Activated naive CD8-positive, alpha-beta T cell treated with anti-CD3 and anti-CD28 coated beads, Interleukin-2, amount 10 ng/mL, durations not matched to agents 7 days and 5 days (primary cell): ENCODE measurements at regions of chr19 and their contacts with region 1.

Region 1: DNA sequence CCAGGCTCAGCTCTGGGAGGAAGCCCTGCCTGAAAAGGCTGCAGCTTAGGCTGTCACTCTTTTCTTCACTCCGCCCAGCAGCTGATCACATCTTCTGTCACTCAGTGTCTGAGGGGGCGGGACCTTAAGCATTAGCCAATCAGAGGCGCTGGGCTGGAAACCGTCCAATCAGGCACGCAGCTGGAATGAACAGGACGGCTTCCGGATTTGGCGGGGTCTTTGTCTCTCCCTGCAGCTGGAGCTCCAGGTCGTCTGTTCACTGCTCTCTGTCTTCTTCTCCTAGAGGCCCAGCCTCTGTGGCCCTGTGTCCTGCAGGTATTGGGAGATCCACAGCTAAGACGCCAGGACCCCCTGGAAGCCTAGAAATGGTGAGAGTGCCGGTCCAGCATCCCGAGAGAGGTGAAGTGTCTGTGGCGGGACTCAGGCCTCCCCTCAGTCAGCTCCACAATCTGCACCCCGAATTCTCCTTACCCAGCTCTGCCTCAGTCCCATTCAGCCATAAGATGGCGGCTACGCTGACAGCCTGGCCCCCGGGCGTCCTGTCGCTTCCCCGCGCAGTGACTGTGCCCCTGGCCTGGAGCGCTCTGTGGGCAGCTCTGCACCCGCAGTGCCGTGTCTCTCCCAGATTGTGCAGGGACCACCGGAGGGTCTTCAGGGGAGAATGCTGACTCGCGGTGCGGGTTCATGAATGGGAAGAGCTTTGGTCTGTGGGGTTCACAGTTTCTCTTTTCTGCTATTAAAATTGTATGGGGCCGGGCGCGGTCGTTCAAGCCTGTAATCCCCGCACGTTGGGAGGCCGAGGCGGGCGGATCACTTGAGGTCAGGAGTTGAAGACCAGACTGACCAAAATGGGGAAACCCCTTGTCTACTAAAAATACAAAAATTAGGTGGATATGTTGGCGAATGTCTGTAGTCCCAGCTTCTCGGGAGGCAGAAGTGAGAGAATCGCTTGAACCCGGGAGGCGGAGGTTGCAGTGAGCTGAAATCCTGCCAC is at the start of gene ZNF66:
- DNase-seq: peak; percentile 87
- ATAC-seq: peak; percentile 97
- H3K4me3 Mint-ChIP-seq: peak within 1 kb of the TSS; percentile 97
- H3K27ac Mint-ChIP-seq: peak within 1 kb of the TSS; percentile 98
- H3K4me1 Mint-ChIP-seq: peaks cover 5% of the 10 kb centered on the region
- H3K27me3 Mint-ChIP-seq: no peaks in the 10 kb centered on the region
- total RNA-seq, gene ZNF66: 15.4 to 16.7 TPM

Region 2: GRCh38 chr19:20423381-20424197 is 352.8 kb before region 1 on chr19:
- POLR2A ChIA-PET with region 1: interaction called, 12 read pairs
- DNase-seq: peak; percentile 52
- ATAC-seq: no peak
- H3K4me3 Mint-ChIP-seq: peak overlapping the region; percentile 96
- H3K27ac Mint-ChIP-seq: peak overlapping the region; percentile 98
- H3K4me1 Mint-ChIP-seq: peaks cover 8% of the 10 kb centered on the region
- H3K27me3 Mint-ChIP-seq: no peaks in the 10 kb centered on the region

Region 3: DNA sequence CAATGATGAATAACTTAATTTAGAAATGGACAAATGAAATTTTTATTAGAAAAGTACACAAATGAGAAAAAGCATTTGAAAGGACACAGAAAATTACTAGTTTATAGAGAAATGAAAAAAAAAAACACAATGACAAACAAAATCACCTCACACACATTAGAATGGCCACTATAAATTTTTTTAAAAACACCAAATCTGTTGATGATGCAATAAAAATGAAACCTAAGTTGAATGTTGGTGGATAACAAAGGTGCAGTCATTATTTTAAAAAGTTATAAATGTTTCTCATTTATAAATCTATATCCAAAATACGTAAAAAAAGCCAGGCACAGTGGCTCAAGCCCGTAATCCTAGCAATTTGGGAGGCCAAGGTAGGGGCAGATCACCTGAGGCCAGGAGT is 135.8 kb before region 1 on chr19:
- POLR2A ChIA-PET with region 1: no interaction called
- DNase-seq: no peak
- ATAC-seq: no peak
- H3K4me3 Mint-ChIP-seq: no peak overlapping the region
- H3K27ac Mint-ChIP-seq: no peak overlapping the region
- H3K4me1 Mint-ChIP-seq: no peaks in the 10 kb centered on the region
- H3K27me3 Mint-ChIP-seq: no peaks in the 10 kb centered on the region

Region 4: DNA sequence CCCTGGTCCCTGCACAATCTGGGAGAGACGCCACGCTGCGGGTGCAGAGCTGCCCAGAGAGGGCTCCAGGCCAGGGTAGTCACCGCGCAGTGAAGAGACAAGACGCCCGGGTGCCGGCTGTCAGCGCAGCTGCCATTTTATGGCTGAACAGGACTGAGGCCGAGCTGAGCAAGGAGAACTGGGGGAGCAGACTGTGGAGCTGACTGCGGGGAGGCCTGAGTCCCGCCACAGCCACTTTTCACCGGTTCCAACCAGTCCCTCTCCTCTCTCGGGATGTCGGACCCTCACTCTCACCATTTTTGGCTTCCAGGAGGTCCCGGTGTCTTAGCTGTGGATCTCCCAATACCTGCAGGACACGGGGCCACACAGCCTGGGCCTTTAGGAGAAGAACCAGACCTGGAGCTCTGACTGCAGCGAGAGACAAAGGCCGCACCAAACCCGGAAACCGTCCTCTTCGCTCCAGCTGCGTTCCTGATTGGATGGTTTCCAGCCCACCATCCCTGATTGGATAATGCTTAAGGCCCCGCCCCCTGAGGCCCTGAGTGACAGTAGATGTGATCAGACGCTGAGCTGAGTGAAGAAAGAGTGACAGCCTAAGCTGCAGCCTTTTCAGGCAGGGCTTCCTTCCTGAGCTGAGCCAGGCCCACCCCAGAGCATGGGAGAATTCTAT is 115.1 kb before region 1 on chr19 and contains the start of gene ZNF626:
- POLR2A ChIA-PET with region 1: interaction called, 26 read pairs
- DNase-seq: peak; percentile 85
- ATAC-seq: peak; percentile 99
- H3K4me3 Mint-ChIP-seq: peak within 1 kb of the TSS; percentile 94
- H3K27ac Mint-ChIP-seq: peak within 1 kb of the TSS; percentile 98
- H3K4me1 Mint-ChIP-seq: peaks cover 10% of the 10 kb centered on the region
- H3K27me3 Mint-ChIP-seq: no peaks in the 10 kb centered on the region
- total RNA-seq, gene ZNF626: 13.6 to 17.8 TPM

Region 5: GRCh38 chr19:20999731-21000352 is 223.5 kb after region 1 on chr19:
- POLR2A ChIA-PET with region 1: interaction called, 25 read pairs
- DNase-seq: peak; percentile 84
- ATAC-seq: peak; percentile 99
- H3K4me3 Mint-ChIP-seq: peak overlapping the region; percentile 95
- H3K27ac Mint-ChIP-seq: peak overlapping the region; percentile 97
- H3K4me1 Mint-ChIP-seq: peaks cover 13% of the 10 kb centered on the region
- H3K27me3 Mint-ChIP-seq: no peaks in the 10 kb centered on the region

Region 6: DNA sequence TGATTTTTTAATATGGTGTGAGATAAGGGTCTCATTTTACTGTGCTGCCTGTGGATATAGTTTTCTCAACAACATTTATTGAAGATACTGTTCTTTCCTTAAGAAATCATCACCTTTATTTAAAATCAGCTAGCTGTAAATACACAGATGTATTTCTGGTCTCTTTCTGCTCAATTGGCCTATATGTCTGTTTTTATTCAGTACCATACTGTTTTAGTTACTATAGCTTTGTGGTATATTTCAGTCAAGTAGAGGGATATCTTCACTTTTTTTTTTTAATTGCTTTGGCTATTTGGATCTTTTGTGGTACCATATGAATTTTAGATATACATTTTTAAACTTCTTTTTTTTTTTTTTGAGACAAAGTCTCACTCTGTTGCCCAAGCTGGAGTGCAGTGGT is 289.0 kb after region 1 on chr19:
- POLR2A ChIA-PET with region 1: no interaction called
- DNase-seq: no peak
- ATAC-seq: no peak
- H3K4me3 Mint-ChIP-seq: no peak overlapping the region
- H3K27ac Mint-ChIP-seq: no peak overlapping the region
- H3K4me1 Mint-ChIP-seq: no peaks in the 10 kb centered on the region
- H3K27me3 Mint-ChIP-seq: no peaks in the 10 kb centered on the region

Region 7: DNA sequence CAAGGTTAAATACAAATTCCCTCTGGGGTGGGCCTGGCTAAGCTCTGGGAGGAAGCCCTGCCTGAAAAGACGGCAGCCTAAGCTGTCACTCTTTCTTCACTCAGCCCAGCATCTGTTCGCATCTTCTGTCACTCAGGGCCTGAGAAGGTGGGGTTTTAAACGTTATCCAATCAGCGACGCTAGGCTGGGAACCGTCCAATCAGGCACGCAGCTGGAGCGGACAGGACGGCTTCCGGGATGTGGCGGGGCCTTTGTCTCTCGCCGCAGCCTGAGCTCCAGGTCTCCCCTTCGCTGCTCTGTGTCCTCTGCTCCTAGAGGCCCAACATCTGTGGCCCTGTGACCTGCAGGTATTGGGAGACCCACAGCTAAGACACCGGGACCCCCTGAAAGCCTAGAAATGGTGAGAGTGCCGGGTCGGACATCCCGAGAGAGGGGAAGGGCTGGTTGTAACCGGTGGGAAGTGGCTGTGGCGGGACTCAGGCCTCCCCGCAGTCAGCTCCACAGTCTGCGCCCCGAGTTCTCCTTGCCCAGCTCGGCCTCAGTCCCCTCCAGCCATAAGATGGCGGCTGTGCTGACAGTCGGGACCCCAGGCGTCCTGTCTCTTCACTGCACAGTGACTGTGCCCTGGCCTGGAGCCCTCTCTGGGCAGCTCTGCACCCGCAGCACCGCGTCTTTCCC is 365.5 kb after region 1 on chr19 and contains the start of gene ZNF431:
- POLR2A ChIA-PET with region 1: interaction called, 13 read pairs
- DNase-seq: peak; percentile 84
- ATAC-seq: peak; percentile 99
- H3K4me3 Mint-ChIP-seq: peak within 1 kb of the TSS; percentile 96
- H3K27ac Mint-ChIP-seq: peak within 1 kb of the TSS; percentile 97
- H3K4me1 Mint-ChIP-seq: peaks cover 15% of the 10 kb centered on the region
- H3K27me3 Mint-ChIP-seq: no peaks in the 10 kb centered on the region
- total RNA-seq, gene ZNF431: 21.5 to 28.2 TPM